A673 (cell line): ENCODE measurements at regions of chr16 and their contacts with region 1.

Region 1: GRCh38 chr16:16127469-16128116 is 95.7 kb downstream of the ABCC6 start:
- DNase-seq: peak; percentile 73
- H3K4me3 ChIP-seq: no peak overlapping the region
- H3K27ac ChIP-seq: no peak overlapping the region
- H3K4me1 ChIP-seq: no peaks in the 10 kb centered on the region
- H3K27me3 ChIP-seq: no peaks in the 10 kb centered on the region
- CTCF ChIP-seq: peak; percentile 88

Region 2: DNA sequence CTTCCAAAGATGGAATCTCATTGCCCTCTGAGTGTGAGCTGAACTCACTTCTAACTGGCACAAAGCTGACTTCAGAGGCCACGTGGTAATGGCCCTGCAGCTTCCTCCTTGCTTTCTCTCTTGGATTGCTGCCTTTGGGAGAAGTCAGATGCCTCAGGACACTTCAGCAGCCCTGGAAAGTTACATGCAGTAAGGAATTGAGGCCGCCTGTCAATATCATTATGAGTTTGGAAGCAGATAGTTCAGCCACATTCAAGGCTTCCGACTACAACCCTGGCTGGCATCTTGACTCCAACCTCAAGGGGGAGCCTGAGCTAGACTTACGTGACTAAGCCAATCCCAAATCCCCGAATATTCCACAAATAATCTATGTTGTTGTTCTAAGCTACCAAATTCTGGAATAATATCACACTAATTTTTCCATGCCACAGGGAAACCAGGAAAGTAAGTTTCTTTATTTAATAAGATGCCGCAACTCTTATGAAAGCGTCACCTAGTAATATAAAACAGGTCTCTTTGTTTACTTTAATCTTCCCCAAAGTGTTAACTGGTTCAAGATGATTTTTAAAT is 252.8 kb before region 1 on chr16:
- CTCF ChIA-PET with region 1: interaction called, 6 read pairs
- POLR2A ChIA-PET with region 1: no interaction called
- intact Hi-C with region 1: loop called (anchors 2 kb)
- DNase-seq: peak; percentile 64
- H3K4me3 ChIP-seq: no peak overlapping the region
- H3K27ac ChIP-seq: no peak overlapping the region
- H3K4me1 ChIP-seq: no peaks in the 10 kb centered on the region
- H3K27me3 ChIP-seq: no peaks in the 10 kb centered on the region
- CTCF ChIP-seq: peak; percentile 76

Region 3: GRCh38 chr16:16197847-16198365 is 70.3 kb after region 1 on chr16:
- CTCF ChIA-PET with region 1: no interaction called
- POLR2A ChIA-PET with region 1: no interaction called
- intact Hi-C with region 1: no loop called
- DNase-seq: no peak
- H3K4me3 ChIP-seq: no peak overlapping the region
- H3K27ac ChIP-seq: no peak overlapping the region
- H3K4me1 ChIP-seq: no peaks in the 10 kb centered on the region
- H3K27me3 ChIP-seq: no peaks in the 10 kb centered on the region
- CTCF ChIP-seq: no peak